ENCODE measurements at regions of chr7 and their contacts with region 1.

Region 1: DNA sequence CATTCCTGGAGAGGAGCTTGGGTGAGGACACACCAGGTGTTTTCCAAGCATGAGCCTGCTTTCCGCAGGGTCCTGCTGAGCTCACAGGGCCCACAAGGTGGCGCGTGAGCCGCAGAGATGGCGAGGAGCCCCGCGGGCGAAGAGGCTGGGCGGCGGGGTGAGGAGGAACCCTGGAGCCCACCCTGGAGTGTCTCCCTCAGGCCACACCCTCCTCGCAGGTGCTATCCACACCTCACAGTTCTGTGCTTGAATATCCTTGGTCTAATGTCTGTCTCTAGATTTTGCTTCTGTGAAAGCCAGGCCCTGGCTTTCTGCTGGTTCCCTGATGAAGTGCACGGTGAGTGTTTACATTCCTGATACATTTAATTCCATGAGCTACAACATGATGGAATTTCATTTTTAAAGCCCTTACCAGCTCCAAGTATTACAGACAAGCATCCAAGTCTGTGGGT is 433.6 kb downstream of the ACTR3B start:
- DNase-seq: no peak
- H3K4me3 ChIP-seq: peak overlapping the region; percentile 34 to 50 (median 38)
- H3K27ac ChIP-seq: peak overlapping the region in 3 of 4 donors; percentile 10 to 36 (median 21)
- H3K4me1 ChIP-seq: peaks cover 0 to 8% (median 6%) of the 10 kb centered on the region in 4 donors
- H3K27me3 ChIP-seq: no peaks in the 10 kb centered on the region
- CTCF ChIP-seq: peak; percentile 74 to 87 (median 81)
- EP300 ChIP-seq: no peak
- POLR2A ChIP-seq: no peak

Region 2: DNA sequence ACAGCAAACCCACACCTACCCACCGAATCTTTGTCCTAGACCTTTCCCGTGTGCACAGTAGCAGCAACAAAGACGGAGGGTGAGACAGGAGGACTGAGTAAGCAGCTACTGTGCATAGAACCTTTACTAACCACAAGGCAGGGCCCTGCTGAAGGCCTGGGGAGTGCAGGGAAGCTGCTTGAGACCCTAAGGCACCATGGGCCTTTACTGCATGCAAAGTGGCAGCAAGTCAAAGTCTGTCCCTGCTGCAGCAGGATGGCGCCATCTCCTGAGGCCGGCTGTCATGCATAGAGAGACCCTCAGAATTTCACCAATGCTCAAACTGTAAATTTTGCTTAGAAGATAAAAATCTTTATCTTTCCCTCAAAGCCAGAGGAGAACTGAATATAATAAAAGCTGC is 176.9 kb after region 1 on chr7:
- intact Hi-C with region 1: loop called (anchors 10 kb)
- DNase-seq: no peak
- H3K4me3 ChIP-seq: no peak overlapping the region
- H3K27ac ChIP-seq: no peak overlapping the region
- H3K4me1 ChIP-seq: no peaks in the 10 kb centered on the region
- H3K27me3 ChIP-seq: no peaks in the 10 kb centered on the region
- CTCF ChIP-seq: no peak
- EP300 ChIP-seq: no peak
- POLR2A ChIP-seq: no peak

Region 3: DNA sequence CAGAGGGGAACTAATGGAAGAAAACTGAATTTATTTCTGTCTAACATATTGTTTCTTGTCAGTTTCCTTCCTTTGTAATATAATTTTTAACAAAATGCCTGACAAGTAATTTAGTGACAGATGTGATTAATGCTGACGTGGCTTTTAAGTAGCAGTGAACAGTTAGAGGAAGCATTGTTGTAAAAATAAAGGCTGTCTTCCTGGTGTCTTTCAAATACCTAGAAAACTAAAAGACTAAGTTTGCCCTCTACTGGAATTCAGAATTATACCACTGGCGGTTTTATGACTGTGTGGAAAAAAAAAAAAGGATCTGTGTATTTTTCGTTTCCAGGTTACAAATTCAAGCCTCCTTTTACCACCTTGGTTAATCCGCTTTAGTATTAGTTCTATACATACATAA is 641.9 kb after region 1 on chr7:
- intact Hi-C with region 1: loop called (anchors 10 kb)
- DNase-seq: no peak
- H3K4me3 ChIP-seq: peak overlapping the region in 2 of 4 donors; percentile 7 to 16
- H3K27ac ChIP-seq: peak overlapping the region; percentile 55 to 62 (median 58)
- H3K4me1 ChIP-seq: peaks cover 0 to 26% (median 17%) of the 10 kb centered on the region in 4 donors
- H3K27me3 ChIP-seq: no peaks in the 10 kb centered on the region
- CTCF ChIP-seq: peak; percentile 44 to 53 (median 52)
- EP300 ChIP-seq: no peak
- POLR2A ChIP-seq: no peak